K562 (cell line): ENCODE measurements at regions of chr21 and their contacts with region 1.

Region 1: GRCh38 chr21:45478115-45478801 is 64.0 kb downstream of the SLC19A1 start:
- DNase-seq: peak; percentile 86 to 92 (median 88)
- ATAC-seq: peak; percentile 94
- H3K4me3 ChIP-seq: peak overlapping the region; percentile 22; the same call in 1 of the 2 replicates
- H3K27ac ChIP-seq: peak overlapping the region; percentile 69
- H3K4me1 ChIP-seq: peaks cover 13 to 87% of the 10 kb centered on the region in 2 experiments; a peak in 4 of 5 replicates
- H3K27me3 ChIP-seq: no peaks in the 10 kb centered on the region; a peak in 1 of 5 replicates
- CTCF ChIP-seq: peak; percentile 96 to 99 (median 98)
- EP300 ChIP-seq: no peak
- POLR2A ChIP-seq: no peak
- RAD21 ChIP-seq: peak; percentile 32 to 74

Region 2: DNA sequence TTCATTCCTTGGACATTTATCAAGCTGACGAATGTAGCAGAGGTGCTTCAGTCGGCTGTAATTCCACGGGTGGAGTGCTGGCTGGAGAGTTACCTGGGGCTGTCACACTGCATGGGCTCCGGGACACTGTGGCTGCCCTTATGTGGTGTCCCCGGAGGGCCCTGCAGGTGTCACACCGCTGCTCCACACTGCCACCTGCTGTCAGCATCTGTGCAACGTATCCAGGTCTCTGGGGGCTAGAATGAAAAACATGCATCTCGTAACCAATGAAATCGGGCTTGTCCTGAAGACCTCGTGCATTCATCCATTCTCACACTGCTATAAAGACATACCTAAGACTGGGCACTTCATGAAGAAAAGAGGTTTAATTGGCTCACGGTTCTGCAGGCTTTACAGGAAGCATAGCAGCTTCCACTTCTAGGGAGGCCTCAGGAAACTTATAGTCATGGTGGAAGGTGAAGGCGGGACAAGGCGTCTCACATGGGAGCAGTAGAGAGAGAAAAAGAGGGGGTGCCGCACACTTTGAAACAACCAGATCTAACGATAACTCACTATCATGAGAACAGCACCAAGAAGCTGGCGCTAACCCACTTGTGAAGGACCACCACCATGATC is 118.6 kb after region 1 on chr21:
- CTCF ChIA-PET with region 1: interaction called, 3 read pairs
- POLR2A ChIA-PET with region 1: no interaction called
- in situ Hi-C with region 1: no loop called
- intact Hi-C with region 1: loop called (anchors 5 kb)
- DNase-seq: peak; percentile 86 to 88 (median 87)
- ATAC-seq: peak; percentile 85
- H3K4me3 ChIP-seq: no peak overlapping the region
- H3K27ac ChIP-seq: no peak overlapping the region
- H3K4me1 ChIP-seq: peaks cover 15 to 44% of the 10 kb centered on the region in 2 experiments
- H3K27me3 ChIP-seq: no peaks in the 10 kb centered on the region; a peak in 1 of 5 replicates
- CTCF ChIP-seq: peak; percentile 94 to 99 (median 95)
- EP300 ChIP-seq: no peak
- POLR2A ChIP-seq: no peak
- RAD21 ChIP-seq: peak; percentile 18 to 80; a peak in 2 of 4 replicates